Transverse colon (tissue), 4 donors: ENCODE measurements at regions of chr3 and their contacts with region 1.

Region 1: GRCh38 chr3:54374214-54374855 is 252.0 kb downstream of the CACNA2D3 start:
- DNase-seq: peak; percentile 41
- H3K4me3 ChIP-seq: no peak overlapping the region
- H3K27ac ChIP-seq: no peak overlapping the region
- H3K4me1 ChIP-seq: no peaks in the 10 kb centered on the region
- H3K27me3 ChIP-seq: peaks cover 2% of the 10 kb centered on the region
- CTCF ChIP-seq: peak; percentile 42 to 72 (median 60)
- EP300 ChIP-seq: no peak
- POLR2A ChIP-seq: no peak

Region 2: GRCh38 chr3:53938645-53939044 is 435.7 kb before region 1 on chr3:
- in situ Hi-C with region 1: loop called in 1 of 4 experiments (anchors 25 kb)
- intact Hi-C with region 1: no loop called
- DNase-seq: peak; percentile 19
- H3K4me3 ChIP-seq: no peak overlapping the region
- H3K27ac ChIP-seq: no peak overlapping the region
- H3K4me1 ChIP-seq: no peaks in the 10 kb centered on the region
- H3K27me3 ChIP-seq: peaks cover 18% of the 10 kb centered on the region
- CTCF ChIP-seq: peak; percentile 66 to 74 (median 72)
- EP300 ChIP-seq: no peak
- POLR2A ChIP-seq: no peak

Region 3: DNA sequence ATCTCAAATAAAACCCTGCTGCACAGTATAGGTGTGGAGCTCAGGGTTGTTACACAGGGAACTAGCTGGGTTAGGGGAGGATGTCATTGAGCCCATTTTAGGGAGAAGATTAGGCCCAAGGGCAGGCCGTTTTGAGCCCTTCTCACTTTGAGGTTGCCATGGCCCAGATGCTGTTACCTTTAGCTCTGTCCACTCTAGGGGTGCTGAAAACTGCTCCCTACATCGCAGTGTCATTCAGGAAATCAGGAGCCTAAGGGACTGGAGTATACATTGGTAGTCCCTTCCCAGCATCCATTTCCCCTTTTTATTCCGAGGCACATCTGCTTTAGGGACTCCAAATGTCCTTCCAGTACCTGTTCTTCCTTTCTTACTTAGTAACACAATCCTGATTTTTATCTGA is 403.7 kb before region 1 on chr3:
- in situ Hi-C with region 1: loop called in 1 of 4 experiments (anchors 25 kb)
- intact Hi-C with region 1: no loop called
- DNase-seq: no peak
- H3K4me3 ChIP-seq: no peak overlapping the region
- H3K27ac ChIP-seq: no peak overlapping the region
- H3K4me1 ChIP-seq: no peaks in the 10 kb centered on the region
- H3K27me3 ChIP-seq: no peaks in the 10 kb centered on the region
- CTCF ChIP-seq: no peak
- EP300 ChIP-seq: no peak
- POLR2A ChIP-seq: no peak

Region 4: GRCh38 chr3:54146506-54147239 is 227.7 kb before region 1 on chr3:
- in situ Hi-C with region 1: loop called in 1 of 4 experiments (anchors 10 kb)
- intact Hi-C with region 1: no loop called
- DNase-seq: peak; percentile 41
- H3K4me3 ChIP-seq: no peak overlapping the region
- H3K27ac ChIP-seq: no peak overlapping the region
- H3K4me1 ChIP-seq: no peaks in the 10 kb centered on the region
- H3K27me3 ChIP-seq: peaks cover 4% of the 10 kb centered on the region
- CTCF ChIP-seq: peak; percentile 46 to 72 (median 67)
- EP300 ChIP-seq: no peak
- POLR2A ChIP-seq: no peak

Region 5: GRCh38 chr3:54520060-54520459 is 145.7 kb after region 1 on chr3:
- in situ Hi-C with region 1: no loop called
- intact Hi-C with region 1: no loop called
- DNase-seq: no peak
- H3K4me3 ChIP-seq: no peak overlapping the region
- H3K27ac ChIP-seq: no peak overlapping the region
- H3K4me1 ChIP-seq: no peaks in the 10 kb centered on the region
- H3K27me3 ChIP-seq: no peaks in the 10 kb centered on the region
- CTCF ChIP-seq: no peak
- EP300 ChIP-seq: no peak
- POLR2A ChIP-seq: no peak